ENCODE measurements at regions of chr3 and their contacts with region 1.

Region 1: GRCh38 chr3:53045518-53046170 is at the start of gene SFMBT1:
- DNase-seq: peak; percentile 62
- H3K4me3 ChIP-seq: peak within 1 kb of the TSS; percentile 78 to 89 (median 81)
- H3K27ac ChIP-seq: peak within 1 kb of the TSS; percentile 63
- H3K4me1 ChIP-seq: peaks cover 21% of the 10 kb centered on the region
- H3K27me3 ChIP-seq: no peaks in the 10 kb centered on the region
- CTCF ChIP-seq: no peak
- total RNA-seq, gene SFMBT1: 8.7 to 21.5 TPM

Region 2: DNA sequence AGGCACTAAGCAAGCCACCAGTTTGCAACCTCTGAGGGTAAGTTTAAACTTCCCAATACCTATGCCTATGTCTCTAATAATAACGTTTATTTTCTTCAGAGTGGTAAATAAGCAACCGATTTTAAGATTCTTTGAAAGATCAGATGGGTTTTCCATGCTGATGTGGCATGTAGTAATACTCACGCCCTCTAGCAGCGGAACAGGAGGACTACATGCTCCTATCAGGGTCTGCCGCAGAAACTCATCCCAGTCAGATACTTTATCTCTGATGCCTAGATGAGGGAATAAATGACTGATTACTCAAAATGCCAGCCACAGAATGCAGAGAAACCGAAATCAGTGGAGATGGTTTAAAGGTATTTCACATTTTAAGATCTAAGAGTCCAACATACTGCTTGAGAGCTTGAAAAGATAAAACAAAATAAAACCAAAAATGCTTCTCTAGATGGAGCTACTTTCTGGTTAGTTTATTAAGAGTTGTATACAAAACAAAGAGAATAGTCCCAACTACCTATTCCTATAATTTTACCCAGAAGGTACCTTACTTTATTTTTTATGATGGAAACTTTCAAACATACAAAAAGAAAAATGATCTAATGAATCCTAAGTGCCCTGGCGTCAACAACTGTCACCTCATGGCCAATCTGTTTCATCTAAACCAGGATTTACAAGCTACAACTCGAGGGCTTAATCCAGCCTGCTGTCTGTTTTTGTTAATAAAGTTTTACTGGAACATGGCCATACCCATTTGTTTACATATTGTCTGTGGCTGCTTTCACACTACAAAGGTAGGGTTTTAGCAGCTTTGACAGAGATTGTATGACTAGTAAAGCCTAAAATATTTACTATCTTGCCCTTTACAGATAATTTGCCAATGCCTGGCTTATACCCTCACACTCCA is 110.8 kb before region 1 on chr3:
- CTCF ChIA-PET with region 1: no interaction called
- dilution Hi-C with region 1: no loop called
- in situ Hi-C with region 1: no loop called
- intact Hi-C with region 1: loop called (anchors 5 kb)
- DNase-seq: peak; percentile 24
- H3K4me3 ChIP-seq: no peak overlapping the region
- H3K27ac ChIP-seq: no peak overlapping the region
- H3K4me1 ChIP-seq: no peaks in the 10 kb centered on the region
- H3K27me3 ChIP-seq: no peaks in the 10 kb centered on the region
- CTCF ChIP-seq: peak; percentile 83 to 87

Region 3: GRCh38 chr3:53375019-53375418 is 329.4 kb after region 1 on chr3:
- CTCF ChIA-PET with region 1: no interaction called
- dilution Hi-C with region 1: no loop called
- in situ Hi-C with region 1: no loop called
- intact Hi-C with region 1: no loop called
- DNase-seq: peak; percentile 28
- H3K4me3 ChIP-seq: no peak overlapping the region
- H3K27ac ChIP-seq: no peak overlapping the region
- H3K4me1 ChIP-seq: no peaks in the 10 kb centered on the region
- H3K27me3 ChIP-seq: no peaks in the 10 kb centered on the region
- CTCF ChIP-seq: peak; percentile 93 to 94